ENCODE measurements at regions of chr10 and their contacts with region 1.

Region 1: DNA sequence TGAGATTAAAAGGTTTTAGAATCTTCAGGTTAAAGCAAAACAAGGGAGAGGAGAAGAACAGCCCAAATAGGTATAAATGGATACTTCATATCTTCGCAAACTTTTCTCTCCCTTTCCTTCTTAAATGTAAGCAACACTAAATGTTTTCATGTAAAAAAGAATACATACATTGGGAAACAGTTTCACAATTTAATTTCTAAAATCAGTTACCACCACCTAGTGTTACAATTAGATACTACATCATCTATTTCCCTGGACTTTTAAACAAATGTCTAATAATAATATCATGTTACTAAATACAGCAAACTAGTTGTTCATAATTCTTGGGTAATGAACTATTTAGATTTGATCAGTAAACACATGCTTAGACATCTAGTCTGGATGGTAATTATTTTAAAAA is 35.8 kb downstream of the MINDY3 start:
- DNase-seq: no peak
- ATAC-seq: no peak
- H3K4me3 ChIP-seq: no peak overlapping the region
- H3K27ac ChIP-seq: no peak overlapping the region
- H3K4me1 ChIP-seq: no peaks in the 10 kb centered on the region
- H3K27me3 ChIP-seq: no peaks in the 10 kb centered on the region

Region 2: DNA sequence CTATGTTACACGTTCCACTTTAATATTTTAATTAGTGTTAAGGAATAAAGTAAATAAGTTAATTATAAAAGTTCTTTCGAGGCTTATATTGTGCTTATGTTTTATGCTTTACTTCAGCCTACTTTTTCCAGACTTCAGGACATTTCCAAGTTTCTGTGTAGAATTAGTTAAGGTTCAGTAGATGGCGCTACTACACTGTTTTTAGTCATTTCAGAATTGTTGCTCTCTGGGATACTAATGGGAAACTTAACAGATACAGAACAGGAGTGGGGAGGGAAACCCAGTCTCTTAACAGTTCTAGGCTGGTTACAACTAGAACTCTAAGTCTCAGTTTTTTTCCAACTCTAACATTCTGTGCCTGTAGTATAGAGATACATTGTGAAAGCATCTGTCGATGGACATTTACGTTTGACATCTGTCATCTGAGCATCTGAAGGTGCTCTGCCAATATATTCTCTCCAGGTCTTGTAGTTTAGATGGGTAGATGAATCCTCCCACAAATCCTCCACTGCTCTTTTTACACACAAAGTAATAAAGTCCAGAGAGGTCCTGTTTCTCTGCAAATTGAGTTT is 396.6 kb before region 1 on chr10:
- intact Hi-C with region 1: loop called in 3 of 4 experiments (anchors 5 to 10 kb)
- DNase-seq: no peak
- ATAC-seq: peak; percentile 54 to 71
- H3K4me3 ChIP-seq: no peak overlapping the region
- H3K27ac ChIP-seq: no peak overlapping the region
- H3K4me1 ChIP-seq: no peaks in the 10 kb centered on the region
- H3K27me3 ChIP-seq: no peaks in the 10 kb centered on the region

Region 3: DNA sequence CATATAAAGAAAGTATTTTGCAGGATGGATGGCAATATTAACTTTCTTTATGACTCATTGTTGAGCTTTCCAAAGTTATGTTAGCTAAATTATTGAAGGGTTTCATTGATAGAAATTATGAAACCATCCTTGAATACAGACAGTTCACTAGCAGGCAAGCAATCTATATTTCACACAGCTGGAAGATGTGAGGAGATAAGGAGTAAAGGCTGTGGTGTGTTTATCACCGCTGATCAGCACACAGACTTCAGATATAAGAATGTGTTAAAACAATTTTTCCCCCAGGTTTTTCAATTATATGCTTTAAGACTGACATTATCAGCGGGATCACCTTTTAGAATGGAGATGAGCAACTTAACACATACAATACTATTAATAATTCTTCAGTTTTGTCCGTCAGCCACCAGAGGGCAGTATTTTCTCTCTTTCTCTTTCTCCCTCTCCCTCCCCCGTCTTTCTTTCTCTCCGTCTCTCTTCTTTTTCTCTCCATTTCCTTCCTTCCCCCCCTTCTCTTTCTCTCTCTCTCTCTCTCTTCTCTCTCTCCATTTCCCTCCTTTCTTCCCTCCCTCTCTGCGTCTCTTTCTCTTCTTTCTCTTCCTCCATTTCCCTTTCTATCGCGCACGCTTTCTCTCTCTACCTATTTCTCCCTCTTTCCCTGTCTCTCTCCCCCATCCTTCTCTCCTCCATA is 390.5 kb before region 1 on chr10:
- intact Hi-C with region 1: loop called in 3 of 4 experiments (anchors 5 to 10 kb)
- DNase-seq: no peak
- ATAC-seq: peak; percentile 72 to 77
- H3K4me3 ChIP-seq: peak overlapping the region; percentile 40
- H3K27ac ChIP-seq: no peak overlapping the region
- H3K4me1 ChIP-seq: no peaks in the 10 kb centered on the region
- H3K27me3 ChIP-seq: no peaks in the 10 kb centered on the region

Region 4: GRCh38 chr10:15703151-15703880 is 121.2 kb before region 1 on chr10:
- intact Hi-C with region 1: no loop called
- DNase-seq: no peak
- ATAC-seq: no peak
- H3K4me3 ChIP-seq: no peak overlapping the region
- H3K27ac ChIP-seq: no peak overlapping the region
- H3K4me1 ChIP-seq: no peaks in the 10 kb centered on the region
- H3K27me3 ChIP-seq: no peaks in the 10 kb centered on the region